Heart left ventricle (tissue), 16 donors: ENCODE measurements at regions of chr18 and their contacts with region 1.

Region 1: DNA sequence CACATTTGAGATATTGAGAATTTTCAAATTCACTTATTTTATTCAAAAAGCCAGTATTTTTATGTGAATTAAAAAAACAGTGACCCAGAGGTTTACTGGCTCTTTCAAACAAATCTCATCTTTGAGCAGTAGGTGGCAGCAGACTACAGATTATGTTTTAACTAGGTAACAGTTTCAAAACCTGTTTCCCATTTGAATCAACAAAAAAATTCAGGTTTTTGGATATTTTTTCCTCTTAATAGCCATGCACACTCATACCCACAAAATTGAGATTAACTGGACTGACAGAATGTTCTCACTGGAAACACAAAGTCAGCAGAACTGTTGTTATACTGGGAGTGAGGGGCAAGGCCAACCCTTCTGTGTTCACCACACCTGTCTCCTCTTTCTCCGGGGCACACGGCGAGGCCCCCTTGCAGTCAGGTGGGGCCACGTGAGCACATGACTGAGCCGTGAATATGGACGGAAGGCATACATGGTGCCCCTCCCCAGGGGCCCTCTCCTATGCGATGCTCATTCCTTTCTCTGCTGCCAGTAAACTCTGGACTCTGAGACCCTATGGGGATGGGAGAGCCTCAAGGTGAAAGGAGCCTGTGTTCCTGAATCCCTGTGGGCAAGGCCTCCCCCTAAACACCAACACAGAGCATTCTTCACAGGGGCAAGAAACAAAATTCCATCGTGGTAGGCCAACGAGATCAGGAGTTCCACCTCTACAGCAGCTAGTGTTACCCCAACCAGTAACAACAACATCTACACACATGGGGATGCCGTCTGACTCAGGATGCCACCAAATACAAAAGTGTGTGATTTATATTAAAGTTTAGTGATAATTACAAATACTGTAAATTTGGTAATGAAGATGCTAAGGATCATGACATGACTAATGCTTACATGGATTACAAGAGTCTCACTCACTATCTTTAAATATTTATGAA is 80.4 kb downstream of the LPIN2 start:
- DNase-seq: no peak
- ATAC-seq: peak in 3 of 4 donors; percentile 11 to 55 (median 52)
- H3K4me3 ChIP-seq: no peak overlapping the region
- H3K27ac ChIP-seq: no peak overlapping the region
- H3K4me1 ChIP-seq: no peaks in the 10 kb centered on the region
- H3K27me3 ChIP-seq: no peaks in the 10 kb centered on the region
- CTCF ChIP-seq: peak; percentile 65 to 88 (median 81)
- POLR2A ChIP-seq: no peak

Region 2: GRCh38 chr18:2978646-2979045 is 46.1 kb after region 1 on chr18:
- intact Hi-C with region 1: loop called in 5 of 10 experiments (anchors 2 to 10 kb)
- DNase-seq: no peak
- ATAC-seq: peak in 3 of 4 donors; percentile 31 to 50 (median 33)
- H3K4me3 ChIP-seq: peak overlapping the region in 4 of 12 donors; percentile 13 to 35 (median 24)
- H3K27ac ChIP-seq: peak overlapping the region in 10 of 12 donors; percentile 4 to 90 (median 46)
- H3K4me1 ChIP-seq: peaks cover 6 to 92% (median 53%) of the 10 kb centered on the region in 12 donors
- H3K27me3 ChIP-seq: no peaks in the 10 kb centered on the region
- CTCF ChIP-seq: no peak
- POLR2A ChIP-seq: no peak

Region 3: GRCh38 chr18:2985628-2986027 is 53.1 kb after region 1 on chr18:
- intact Hi-C with region 1: loop called in 6 of 10 experiments (anchors 2 to 10 kb)
- DNase-seq: no peak
- ATAC-seq: no peak
- H3K4me3 ChIP-seq: no peak overlapping the region
- H3K27ac ChIP-seq: no peak overlapping the region
- H3K4me1 ChIP-seq: peaks cover 0 to 47% (median 16%) of the 10 kb centered on the region in 12 donors
- H3K27me3 ChIP-seq: no peaks in the 10 kb centered on the region
- CTCF ChIP-seq: peak; percentile 33 to 57 (median 50)
- POLR2A ChIP-seq: no peak

Region 4: GRCh38 chr18:3062798-3063680 is 130.5 kb after region 1 on chr18:
- intact Hi-C with region 1: loop called (anchors 1 to 5 kb)
- DNase-seq: peak; percentile 61 to 83 (median 67)
- ATAC-seq: peak; percentile 59 to 71 (median 68)
- H3K4me3 ChIP-seq: peak overlapping the region in 1 of 12 donors; percentile 13
- H3K27ac ChIP-seq: peak overlapping the region in 1 of 12 donors; percentile 84
- H3K4me1 ChIP-seq: peaks cover 0 to 39% (median 13%) of the 10 kb centered on the region in 12 donors
- H3K27me3 ChIP-seq: no peaks in the 10 kb centered on the region
- CTCF ChIP-seq: peak; percentile 58 to 82 (median 72)
- POLR2A ChIP-seq: no peak

Region 5: DNA sequence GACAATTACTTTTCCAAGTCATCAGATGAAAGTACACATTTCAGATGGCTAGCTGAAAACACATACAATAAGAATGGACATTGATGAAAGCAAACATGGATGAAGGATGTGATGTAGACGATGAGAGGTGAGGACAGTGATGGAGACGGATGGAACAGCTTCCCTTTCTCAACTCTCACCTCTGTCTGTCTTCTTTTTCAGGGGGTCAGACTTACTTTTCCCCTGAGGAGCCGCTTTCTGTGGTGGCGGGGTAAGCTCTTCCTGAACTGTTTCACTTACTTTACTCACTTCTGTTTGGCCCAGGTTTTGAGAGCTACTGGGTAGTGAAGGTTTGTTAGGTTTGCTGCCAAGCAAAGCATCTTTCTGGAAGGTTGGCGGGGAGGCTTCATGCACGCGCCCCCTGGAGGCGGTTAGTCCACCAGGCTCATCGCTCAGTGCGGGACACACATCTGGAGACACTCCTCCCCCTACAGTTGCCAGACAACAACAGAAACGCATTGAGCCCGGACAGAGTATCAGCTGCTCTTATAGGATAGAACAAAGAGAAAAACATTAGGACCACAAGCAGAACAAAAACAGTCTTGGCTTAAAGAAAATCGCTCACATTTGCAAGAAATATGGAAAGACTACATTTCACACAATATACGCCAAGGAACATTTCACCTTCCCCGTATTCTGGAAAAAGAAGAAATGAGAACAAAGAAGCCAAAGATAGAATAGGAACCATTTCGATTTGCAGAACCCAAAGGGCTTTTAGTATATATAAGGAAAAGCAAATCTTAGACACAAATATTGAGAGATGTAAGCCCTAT is 196.7 kb after region 1 on chr18:
- intact Hi-C with region 1: loop called in 9 of 10 experiments (anchors 2 to 10 kb)
- DNase-seq: peak; percentile 75 to 89 (median 80)
- ATAC-seq: peak; percentile 74 to 89 (median 88)
- H3K4me3 ChIP-seq: no peak overlapping the region
- H3K27ac ChIP-seq: peak overlapping the region in 1 of 12 donors; percentile 3
- H3K4me1 ChIP-seq: peaks cover 0 to 17% (median 0%) of the 10 kb centered on the region in 12 donors
- H3K27me3 ChIP-seq: no peaks in the 10 kb centered on the region
- CTCF ChIP-seq: peak; percentile 59 to 89 (median 78)
- POLR2A ChIP-seq: no peak

Region 6: GRCh38 chr18:3151399-3152264 is 219.1 kb after region 1 on chr18:
- intact Hi-C with region 1: loop called in 2 of 10 experiments (anchors 5 to 10 kb)
- DNase-seq: no peak
- ATAC-seq: no peak
- H3K4me3 ChIP-seq: no peak overlapping the region
- H3K27ac ChIP-seq: peak overlapping the region in 1 of 12 donors; percentile 0
- H3K4me1 ChIP-seq: peaks cover 3 to 39% (median 20%) of the 10 kb centered on the region in 12 donors
- H3K27me3 ChIP-seq: no peaks in the 10 kb centered on the region
- CTCF ChIP-seq: peak; percentile 64 to 86 (median 72)
- POLR2A ChIP-seq: no peak

Region 7: DNA sequence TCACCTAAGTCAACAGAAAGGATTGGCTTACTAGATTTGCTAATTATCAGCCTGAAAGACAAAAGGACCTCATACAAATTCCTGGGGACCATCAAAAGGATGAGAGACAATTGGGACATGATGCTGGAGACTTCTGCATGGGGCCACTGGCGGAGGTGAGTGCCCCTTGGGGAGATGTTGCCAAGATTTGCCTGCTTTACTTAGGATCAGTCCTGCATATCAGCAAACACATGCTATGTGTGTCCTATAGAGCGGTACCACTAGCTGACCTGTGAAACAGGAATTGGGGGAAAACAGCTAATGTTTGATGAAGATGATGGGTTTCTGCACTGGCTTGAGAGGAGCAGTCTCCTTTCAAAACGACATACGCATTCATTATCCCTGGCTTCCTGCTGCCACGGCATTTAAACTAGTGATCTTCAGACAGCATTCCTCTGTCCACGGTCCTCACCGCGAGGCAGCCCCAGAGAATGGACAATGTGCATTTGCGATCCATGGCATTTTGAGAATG is 621.6 kb after region 1 on chr18:
- intact Hi-C with region 1: no loop called
- DNase-seq: no peak
- ATAC-seq: no peak
- H3K4me3 ChIP-seq: no peak overlapping the region
- H3K27ac ChIP-seq: no peak overlapping the region
- H3K4me1 ChIP-seq: no peaks in the 10 kb centered on the region
- H3K27me3 ChIP-seq: no peaks in the 10 kb centered on the region
- CTCF ChIP-seq: no peak
- POLR2A ChIP-seq: no peak

Region 8: GRCh38 chr18:3722320-3723000 is 789.9 kb after region 1 on chr18:
- intact Hi-C with region 1: no loop called
- DNase-seq: no peak
- ATAC-seq: peak in 3 of 4 donors; percentile 18 to 44 (median 44)
- H3K4me3 ChIP-seq: no peak overlapping the region
- H3K27ac ChIP-seq: peak overlapping the region in 1 of 12 donors; percentile 64
- H3K4me1 ChIP-seq: peaks cover 0 to 46% (median 0%) of the 10 kb centered on the region in 12 donors
- H3K27me3 ChIP-seq: no peaks in the 10 kb centered on the region
- CTCF ChIP-seq: no peak
- POLR2A ChIP-seq: no peak